ENCODE measurements at regions of chr4 and their contacts with region 1.

Region 1: GRCh38 chr4:38160487-38161207 is 200.4 kb downstream of the PTTG2 start:
- DNase-seq: no peak
- H3K4me3 ChIP-seq: no peak overlapping the region
- H3K27ac ChIP-seq: no peak overlapping the region
- H3K4me1 ChIP-seq: peaks cover 4% of the 10 kb centered on the region
- H3K27me3 ChIP-seq: no peaks in the 10 kb centered on the region
- CTCF ChIP-seq: no peak
- EP300 ChIP-seq: no peak
- POLR2A ChIP-seq: no peak

Region 2: DNA sequence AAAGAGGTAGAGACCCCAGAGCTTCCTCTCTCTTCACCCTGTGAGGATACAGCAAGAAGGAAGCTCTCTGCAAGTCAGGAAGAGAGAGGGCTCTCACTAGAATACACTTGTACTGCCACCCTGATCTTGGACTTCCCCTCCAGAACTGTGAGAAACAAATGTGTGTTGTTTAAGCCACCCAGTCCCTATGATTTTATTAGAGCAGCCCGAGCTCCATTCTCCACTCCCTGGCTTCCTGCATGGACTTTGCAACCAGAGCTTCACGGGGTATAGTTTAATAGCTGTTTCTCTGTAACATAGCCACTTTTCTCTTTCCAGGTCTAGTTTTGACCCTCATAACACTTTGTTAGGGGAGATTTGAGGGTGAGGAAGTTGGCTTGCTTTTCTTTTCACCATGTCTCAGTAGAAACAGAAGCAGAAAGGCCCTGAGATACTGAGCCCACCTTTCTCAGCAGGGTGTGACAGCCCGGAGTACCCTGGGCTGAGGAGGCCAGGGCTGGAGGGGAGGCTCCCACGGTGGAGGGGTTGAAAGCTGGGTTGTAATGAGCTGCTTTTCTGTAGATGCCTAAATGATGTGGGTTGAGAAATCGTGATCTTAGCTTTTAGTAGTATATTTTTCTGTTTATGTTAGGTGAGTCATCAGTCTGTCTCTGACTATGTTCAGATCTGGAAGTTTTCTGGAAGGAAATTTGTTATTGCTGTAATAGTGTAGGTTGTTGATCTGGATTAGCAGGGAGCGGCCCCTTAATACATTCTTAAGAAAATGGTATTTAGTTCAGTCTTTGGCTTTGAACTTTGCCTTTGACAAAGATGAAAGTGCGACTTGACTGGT is 81.8 kb before region 1 on chr4:
- intact Hi-C with region 1: loop called in 1 of 4 experiments (anchors 10 kb)
- DNase-seq: no peak
- H3K4me3 ChIP-seq: no peak overlapping the region
- H3K27ac ChIP-seq: peak overlapping the region in 1 of 2 donors; percentile 40
- H3K4me1 ChIP-seq: peaks cover 17% of the 10 kb centered on the region
- H3K27me3 ChIP-seq: no peaks in the 10 kb centered on the region
- CTCF ChIP-seq: no peak
- EP300 ChIP-seq: no peak
- POLR2A ChIP-seq: no peak

Region 3: GRCh38 chr4:38461342-38461741 is 300.7 kb after region 1 on chr4:
- intact Hi-C with region 1: no loop called
- DNase-seq: no peak
- H3K4me3 ChIP-seq: no peak overlapping the region
- H3K27ac ChIP-seq: no peak overlapping the region
- H3K4me1 ChIP-seq: no peaks in the 10 kb centered on the region
- H3K27me3 ChIP-seq: no peaks in the 10 kb centered on the region
- CTCF ChIP-seq: no peak
- EP300 ChIP-seq: no peak
- POLR2A ChIP-seq: no peak

Measured in ovary (tissue), 10 donors.